AG04450 (cell line): ENCODE measurements at regions of chr16 and their contacts with region 1.

Region 1: GRCh38 chr16:21656795-21657768 is 4.7 kb upstream of the IGSF6 start:
- DNase-seq: no peak
- H3K4me3 ChIP-seq: no peak overlapping the region
- H3K27ac ChIP-seq: no peak overlapping the region
- H3K27me3 ChIP-seq: no peaks in the 10 kb centered on the region
- CTCF ChIP-seq: peak; percentile 88

Region 2: DNA sequence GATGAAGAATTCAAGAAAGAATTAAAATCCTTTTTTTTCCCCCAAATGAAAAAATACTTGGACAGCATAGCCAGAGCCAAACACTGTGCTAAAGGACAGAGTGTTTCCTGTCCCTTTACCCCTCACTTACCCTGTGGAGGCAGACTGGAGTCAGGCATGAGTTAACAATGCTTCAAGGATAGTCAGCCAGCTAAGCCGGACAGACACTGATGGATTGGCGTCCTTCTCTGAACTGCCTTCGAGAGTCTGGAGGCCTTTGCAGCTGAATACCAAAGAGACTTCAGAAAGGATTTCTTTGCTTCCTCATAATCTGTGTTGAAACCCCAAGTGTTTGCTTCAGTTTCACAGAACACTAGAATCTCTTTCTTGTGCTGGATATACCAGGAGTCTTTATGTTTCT is 53.2 kb before region 1 on chr16:
- CTCF ChIA-PET with region 1: interaction called, 27 read pairs
- POLR2A ChIA-PET with region 1: no interaction called
- DNase-seq: no peak
- H3K4me3 ChIP-seq: no peak overlapping the region
- H3K27ac ChIP-seq: no peak overlapping the region
- H3K27me3 ChIP-seq: no peaks in the 10 kb centered on the region
- CTCF ChIP-seq: no peak

Region 3: DNA sequence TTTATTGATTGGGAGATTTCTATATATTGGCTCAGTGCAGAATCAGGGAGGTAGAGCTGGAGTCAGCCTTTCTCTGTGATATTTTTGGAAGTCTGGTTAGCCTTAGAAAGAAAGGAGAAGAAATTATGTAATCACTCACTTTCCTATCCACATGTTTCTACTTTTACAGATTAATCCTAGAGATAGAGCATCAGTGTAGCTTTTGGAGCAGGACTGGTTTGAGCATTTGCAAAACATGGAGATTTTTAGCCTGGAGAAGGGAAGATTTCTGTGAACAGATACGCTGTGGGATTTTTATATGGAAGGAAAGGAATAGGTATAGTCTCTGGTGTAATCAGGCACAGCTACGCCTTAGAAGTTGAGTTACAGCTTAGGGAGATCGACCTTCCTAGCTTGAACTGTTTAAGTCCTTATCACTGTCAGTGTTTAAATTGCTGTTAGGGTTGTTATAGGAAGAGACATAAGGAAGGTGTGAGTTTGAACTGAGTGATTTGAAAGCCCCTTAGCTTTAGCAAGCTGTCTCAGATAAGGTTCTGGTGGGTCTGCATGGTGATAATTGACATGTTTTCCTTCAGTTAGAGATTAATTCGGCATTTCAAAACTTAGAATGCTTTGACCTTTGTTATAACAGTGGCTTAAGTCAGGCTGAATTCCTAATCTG is 37.2 kb before region 1 on chr16:
- CTCF ChIA-PET with region 1: interaction called, 28 read pairs
- POLR2A ChIA-PET with region 1: no interaction called
- DNase-seq: no peak
- H3K4me3 ChIP-seq: no peak overlapping the region
- H3K27ac ChIP-seq: no peak overlapping the region
- H3K27me3 ChIP-seq: no peaks in the 10 kb centered on the region
- CTCF ChIP-seq: no peak

Region 4: GRCh38 chr16:21646721-21647561 is 10.1 kb before region 1 on chr16:
- CTCF ChIA-PET with region 1: interaction called, 121 read pairs
- POLR2A ChIA-PET with region 1: no interaction called
- DNase-seq: no peak
- H3K4me3 ChIP-seq: no peak overlapping the region
- H3K27ac ChIP-seq: no peak overlapping the region
- H3K27me3 ChIP-seq: no peaks in the 10 kb centered on the region
- CTCF ChIP-seq: no peak

Region 5: GRCh38 chr16:21708533-21709115 is 51.5 kb after region 1 on chr16:
- CTCF ChIA-PET with region 1: interaction called, 46 read pairs
- POLR2A ChIA-PET with region 1: no interaction called
- DNase-seq: peak; percentile 13
- H3K4me3 ChIP-seq: no peak overlapping the region
- H3K27ac ChIP-seq: no peak overlapping the region
- H3K27me3 ChIP-seq: peaks cover 5% of the 10 kb centered on the region
- CTCF ChIP-seq: peak; percentile 87